HCT116 (cell line): ENCODE measurements at regions of chr10 and their contacts with region 1.

Region 1: DNA sequence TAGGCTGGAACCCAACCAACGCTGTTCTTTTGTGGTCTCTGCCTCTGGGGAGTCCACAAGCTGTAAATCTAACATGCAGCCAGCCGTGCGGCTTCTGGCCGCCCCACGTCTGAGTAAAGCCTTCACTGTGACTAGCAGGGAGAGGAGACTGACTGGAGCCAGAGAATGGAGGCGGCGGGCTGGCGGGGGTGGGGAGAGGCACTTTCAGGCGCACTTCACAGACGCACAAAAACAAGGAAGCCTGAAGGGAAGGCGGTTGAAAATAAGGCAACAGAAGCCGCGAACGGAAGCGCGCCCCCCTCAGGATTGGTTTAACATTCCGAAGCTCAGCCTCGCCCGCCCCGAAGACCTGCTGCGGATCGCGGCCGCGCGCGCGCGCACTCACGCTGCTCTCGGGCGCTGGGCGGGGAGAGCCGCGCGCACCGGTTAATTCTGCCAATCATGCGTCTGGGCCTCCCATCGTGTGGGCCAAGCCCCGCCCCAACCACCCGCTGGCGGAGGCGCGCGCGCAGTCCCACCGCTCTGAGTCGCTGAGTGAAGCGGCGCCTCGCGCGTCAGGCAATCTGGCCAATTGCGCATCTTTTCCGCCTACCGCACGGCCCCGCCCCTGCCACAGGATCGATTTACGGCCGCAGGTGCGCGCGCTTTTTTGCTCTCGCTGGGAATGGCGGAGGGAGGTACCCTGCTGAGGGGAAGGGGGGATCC is at the start of gene SFR1:
- DNase-seq: peak; percentile 99
- ATAC-seq: peak; percentile 85
- H3K4me3 ChIP-seq: peak within 1 kb of the TSS; percentile 83 to 86
- H3K27ac ChIP-seq: peak within 1 kb of the TSS; percentile 96
- H3K4me1 ChIP-seq: peaks cover 41 to 65% of the 10 kb centered on the region in 2 experiments
- H3K27me3 ChIP-seq: no peaks in the 10 kb centered on the region
- CTCF ChIP-seq: peak in 2 of 3 experiments; percentile 59 to 74; a peak in 4 of 6 replicates
- POLR2A ChIP-seq: peak; percentile 71
- RAD21 ChIP-seq: no peak
- total RNA-seq, gene SFR1: 38.5 TPM

Region 2: GRCh38 chr10:103845972-103846371 is 275.7 kb before region 1 on chr10:
- CTCF ChIA-PET with region 1: no interaction called
- POLR2A ChIA-PET with region 1: no interaction called
- RAD21 ChIA-PET with region 1: no interaction called
- intact Hi-C with region 1: no loop called
- DNase-seq: no peak
- ATAC-seq: no peak
- H3K4me3 ChIP-seq: no peak overlapping the region
- H3K27ac ChIP-seq: no peak overlapping the region
- H3K4me1 ChIP-seq: no peaks in the 10 kb centered on the region
- H3K27me3 ChIP-seq: peaks cover 6% of the 10 kb centered on the region; the same call in 1 of the 2 replicates
- CTCF ChIP-seq: no peak
- POLR2A ChIP-seq: no peak
- RAD21 ChIP-seq: no peak

Region 3: GRCh38 chr10:104045151-104046089 is 76.3 kb before region 1 on chr10:
- CTCF ChIA-PET with region 1: interaction called, 6 read pairs
- POLR2A ChIA-PET with region 1: interaction called, 4 read pairs
- RAD21 ChIA-PET with region 1: no interaction called
- intact Hi-C with region 1: loop called (anchors 1 kb)
- DNase-seq: peak; percentile 74
- ATAC-seq: peak; percentile 93
- H3K4me3 ChIP-seq: no peak overlapping the region
- H3K27ac ChIP-seq: no peak overlapping the region
- H3K4me1 ChIP-seq: peaks cover 15 to 38% of the 10 kb centered on the region in 2 experiments
- H3K27me3 ChIP-seq: no peaks in the 10 kb centered on the region
- CTCF ChIP-seq: peak in 2 of 3 experiments; percentile 90 to 94; a peak in 4 of 6 replicates
- POLR2A ChIP-seq: no peak
- RAD21 ChIP-seq: no peak

Region 4: GRCh38 chr10:104080762-104081161 is 40.9 kb before region 1 on chr10:
- CTCF ChIA-PET with region 1: interaction called, 7 read pairs
- POLR2A ChIA-PET with region 1: interaction called, 5 read pairs
- RAD21 ChIA-PET with region 1: interaction called in 1 of 2 experiments, 3 read pairs
- intact Hi-C with region 1: loop called (anchors 2 kb)
- DNase-seq: peak; percentile 59
- ATAC-seq: peak; percentile 78
- H3K4me3 ChIP-seq: no peak overlapping the region
- H3K27ac ChIP-seq: no peak overlapping the region
- H3K4me1 ChIP-seq: peaks cover 14 to 26% of the 10 kb centered on the region in 2 experiments
- H3K27me3 ChIP-seq: no peaks in the 10 kb centered on the region
- CTCF ChIP-seq: peak; percentile 60 to 69 (median 63); a peak in 5 of 6 replicates
- POLR2A ChIP-seq: no peak
- RAD21 ChIP-seq: peak; percentile 60

Region 5: GRCh38 chr10:104139221-104139620 is 17.5 kb after region 1 on chr10:
- CTCF ChIA-PET with region 1: interaction called, 44 read pairs
- POLR2A ChIA-PET with region 1: interaction called, 12 read pairs
- RAD21 ChIA-PET with region 1: no interaction called
- intact Hi-C with region 1: no loop called
- DNase-seq: no peak
- ATAC-seq: peak; percentile 84
- H3K4me3 ChIP-seq: no peak overlapping the region
- H3K27ac ChIP-seq: no peak overlapping the region
- H3K4me1 ChIP-seq: no peaks in the 10 kb centered on the region
- H3K27me3 ChIP-seq: no peaks in the 10 kb centered on the region
- CTCF ChIP-seq: peak; percentile 52 to 86 (median 80); a peak in 5 of 6 replicates
- POLR2A ChIP-seq: no peak
- RAD21 ChIP-seq: peak; percentile 77

Region 6: GRCh38 chr10:104353325-104354048 is 231.8 kb after region 1 on chr10 and contains the start of gene CFAP58:
- CTCF ChIA-PET with region 1: interaction called, 3 read pairs
- POLR2A ChIA-PET with region 1: interaction called, 6 read pairs
- RAD21 ChIA-PET with region 1: no interaction called
- intact Hi-C with region 1: loop called (anchors 5 kb)
- DNase-seq: peak; percentile 89
- ATAC-seq: peak; percentile 97
- H3K4me3 ChIP-seq: peak within 1 kb of the TSS; percentile 20 to 38
- H3K27ac ChIP-seq: no peak within 1 kb of the TSS
- H3K4me1 ChIP-seq: peaks cover 7 to 33% of the 10 kb centered on the region in 2 experiments; a peak in 3 of 4 replicates
- H3K27me3 ChIP-seq: no peaks in the 10 kb centered on the region; the same call in 1 of the 2 replicates
- CTCF ChIP-seq: peak; percentile 41 to 83 (median 75); a peak in 4 of 6 replicates
- POLR2A ChIP-seq: no peak
- RAD21 ChIP-seq: peak; percentile 9; the same call in 1 of the 2 replicates
- total RNA-seq, gene CFAP58: 0.91 TPM